ENCODE measurements at regions of chr12 and their contacts with region 1.

Region 1: DNA sequence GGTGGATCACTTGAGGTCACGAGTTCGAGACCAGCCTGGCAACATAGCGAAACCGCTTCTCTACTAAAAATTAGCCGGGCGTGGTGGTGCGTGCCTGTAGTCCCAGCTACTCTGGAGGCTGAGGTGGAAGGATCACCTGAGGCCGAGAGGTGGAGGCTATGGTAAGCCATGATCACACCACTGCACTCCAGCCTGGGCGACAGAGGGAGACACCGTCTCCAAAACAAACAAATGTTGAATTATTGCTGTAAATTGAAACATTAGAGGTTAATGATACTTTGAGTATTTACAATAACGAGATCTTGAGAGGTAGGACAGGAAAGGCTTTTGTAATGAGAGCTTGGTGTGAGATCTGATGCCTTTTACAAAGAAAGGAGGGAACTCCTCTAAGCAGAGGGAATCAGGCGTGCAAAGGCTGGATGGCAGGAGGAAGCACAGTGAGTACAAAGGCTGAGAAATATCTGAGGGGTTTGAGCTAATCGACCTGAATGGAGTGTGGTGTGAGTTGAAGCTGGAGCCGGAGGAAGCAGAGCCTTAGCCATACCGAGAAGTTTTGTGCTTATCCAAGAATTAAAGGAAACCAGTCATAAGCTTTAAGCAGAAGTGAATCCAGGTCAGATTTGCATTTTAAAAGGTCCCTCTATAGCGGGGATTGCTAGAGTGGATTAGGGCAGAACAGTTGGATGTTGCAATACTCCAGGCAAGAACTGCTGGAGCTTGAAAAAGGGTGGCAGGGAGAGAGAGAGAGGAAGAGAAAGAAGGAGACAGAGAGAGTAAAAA is 1.1 kb downstream of the RHNO1 start:
- H3K4me3 Mint-ChIP-seq: peak overlapping the region; percentile 85
- H3K27ac Mint-ChIP-seq: peak overlapping the region; percentile 92
- H3K4me1 Mint-ChIP-seq: peaks cover 44% of the 10 kb centered on the region
- H3K27me3 Mint-ChIP-seq: no peaks in the 10 kb centered on the region

Region 2: GRCh38 chr12:2858944-2859421 is 19.2 kb before region 1 on chr12:
- intact Hi-C with region 1: no loop called
- H3K4me3 Mint-ChIP-seq: no peak overlapping the region
- H3K27ac Mint-ChIP-seq: no peak overlapping the region
- H3K4me1 Mint-ChIP-seq: no peaks in the 10 kb centered on the region
- H3K27me3 Mint-ChIP-seq: no peaks in the 10 kb centered on the region

Region 3: DNA sequence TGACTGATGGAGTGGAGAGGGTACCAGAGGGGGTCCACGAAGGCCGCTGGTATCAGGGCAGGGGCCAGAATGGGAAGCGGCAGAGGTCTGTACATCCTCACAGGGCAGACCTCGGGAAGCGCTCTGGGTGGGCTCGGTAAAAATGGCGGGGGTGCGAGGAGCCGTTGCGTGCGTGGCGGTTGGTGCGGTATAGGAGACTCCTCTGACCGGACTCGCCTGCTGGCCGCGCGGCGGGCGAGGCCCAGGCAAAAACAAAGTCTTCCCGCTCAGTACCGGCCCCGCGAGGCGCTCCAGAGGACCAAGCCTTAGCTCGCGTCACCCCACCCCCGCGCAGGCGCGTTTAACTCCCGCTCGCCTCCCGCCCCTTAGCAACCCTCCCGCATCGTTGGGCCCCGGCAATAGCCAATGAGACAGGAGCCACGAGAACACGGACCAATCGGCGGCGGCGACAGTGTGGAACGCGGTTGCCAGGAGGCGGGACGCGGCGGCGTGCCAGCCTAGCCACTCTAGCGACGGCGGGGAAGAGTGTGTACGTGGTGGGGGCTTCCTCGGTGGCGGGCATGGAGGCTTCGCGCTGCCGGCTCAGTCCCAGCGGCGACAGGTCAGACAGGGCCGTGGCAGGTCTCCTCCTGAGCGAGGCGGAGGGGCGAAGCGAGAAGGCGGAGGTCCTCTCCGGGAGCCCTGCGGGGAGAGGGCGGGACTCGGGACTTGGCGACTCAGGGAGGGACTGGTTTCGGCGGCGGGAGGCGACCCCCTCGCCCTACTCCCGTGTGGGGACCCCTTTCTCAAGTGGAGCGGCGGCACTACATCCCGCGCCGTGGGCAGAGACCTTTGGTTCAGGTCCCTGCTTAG is 12.5 kb after region 1 on chr12 and contains the start of gene TULP3:
- intact Hi-C with region 1: loop called (anchors 1 kb)
- H3K4me3 Mint-ChIP-seq: peak within 1 kb of the TSS; percentile 81
- H3K27ac Mint-ChIP-seq: peak within 1 kb of the TSS; percentile 71
- H3K4me1 Mint-ChIP-seq: peaks cover 17% of the 10 kb centered on the region
- H3K27me3 Mint-ChIP-seq: no peaks in the 10 kb centered on the region

Region 4: GRCh38 chr12:2924019-2924418 is 45.9 kb after region 1 on chr12:
- intact Hi-C with region 1: no loop called
- H3K4me3 Mint-ChIP-seq: no peak overlapping the region
- H3K27ac Mint-ChIP-seq: no peak overlapping the region
- H3K4me1 Mint-ChIP-seq: peaks cover 7% of the 10 kb centered on the region
- H3K27me3 Mint-ChIP-seq: no peaks in the 10 kb centered on the region